A673 (cell line): ENCODE measurements at regions of chr19 and their contacts with region 1.

Region 1: GRCh38 chr19:32387701-32388392 is 17.7 kb upstream of the DPY19L3 start:
- DNase-seq: peak; percentile 6
- H3K4me3 ChIP-seq: no peak overlapping the region
- H3K27ac ChIP-seq: no peak overlapping the region
- H3K4me1 ChIP-seq: peaks cover 2% of the 10 kb centered on the region
- H3K27me3 ChIP-seq: no peaks in the 10 kb centered on the region
- CTCF ChIP-seq: no peak

Region 2: GRCh38 chr19:32200312-32201038 is 187.4 kb before region 1 on chr19:
- CTCF ChIA-PET with region 1: no interaction called
- POLR2A ChIA-PET with region 1: no interaction called
- intact Hi-C with region 1: no loop called
- DNase-seq: no peak
- H3K4me3 ChIP-seq: no peak overlapping the region
- H3K27ac ChIP-seq: no peak overlapping the region
- H3K4me1 ChIP-seq: peaks cover 9% of the 10 kb centered on the region
- H3K27me3 ChIP-seq: no peaks in the 10 kb centered on the region
- CTCF ChIP-seq: no peak

Region 3: DNA sequence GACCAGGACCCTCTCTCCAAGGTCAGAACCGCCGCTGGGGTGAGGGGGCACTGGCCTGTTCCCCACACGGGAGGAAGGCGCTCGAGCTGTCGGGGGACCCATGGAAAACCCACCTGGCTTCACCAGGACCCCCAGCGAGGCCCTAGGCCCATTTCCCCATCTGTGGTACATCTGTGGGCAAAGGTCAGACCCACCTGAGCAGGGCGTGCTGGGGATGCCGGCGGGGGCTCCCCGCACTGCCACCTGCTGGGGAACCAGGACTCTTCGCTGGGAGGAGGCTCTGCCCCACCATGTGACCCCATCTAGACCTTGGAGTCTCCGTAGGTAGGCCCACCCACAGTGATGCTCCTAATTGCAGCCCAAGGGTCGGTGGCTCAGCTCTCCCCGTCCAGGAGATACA is 744.6 kb after region 1 on chr19:
- CTCF ChIA-PET with region 1: no interaction called
- POLR2A ChIA-PET with region 1: interaction called, 20 read pairs
- intact Hi-C with region 1: no loop called
- DNase-seq: no peak
- H3K4me3 ChIP-seq: no peak overlapping the region
- H3K27ac ChIP-seq: no peak overlapping the region
- H3K4me1 ChIP-seq: no peaks in the 10 kb centered on the region
- H3K27me3 ChIP-seq: no peaks in the 10 kb centered on the region
- CTCF ChIP-seq: peak; percentile 27; the same call in 1 of the 2 replicates